Psoas muscle (tissue), 8 donors: ENCODE measurements at regions of chr6 and their contacts with region 1.

Region 1: GRCh38 chr6:123802697-123803496 is 768 bp upstream of the NKAIN2 start:
- DNase-seq: peak; percentile 71 to 91
- ATAC-seq: peak; percentile 90 to 95 (median 94)
- H3K4me3 ChIP-seq: peak overlapping the region; percentile 82
- H3K27ac ChIP-seq: peak overlapping the region; percentile 54
- H3K4me1 ChIP-seq: peaks cover 6% of the 10 kb centered on the region
- H3K27me3 ChIP-seq: no peaks in the 10 kb centered on the region
- CTCF ChIP-seq: peak; percentile 95

Region 2: GRCh38 chr6:123777563-123777962 is 25.3 kb before region 1 on chr6:
- intact Hi-C with region 1: no loop called
- DNase-seq: no peak
- ATAC-seq: peak in 1 of 4 donors; percentile 45
- H3K4me3 ChIP-seq: no peak overlapping the region
- H3K27ac ChIP-seq: no peak overlapping the region
- H3K4me1 ChIP-seq: no peaks in the 10 kb centered on the region
- H3K27me3 ChIP-seq: no peaks in the 10 kb centered on the region
- CTCF ChIP-seq: peak; percentile 33

Region 3: DNA sequence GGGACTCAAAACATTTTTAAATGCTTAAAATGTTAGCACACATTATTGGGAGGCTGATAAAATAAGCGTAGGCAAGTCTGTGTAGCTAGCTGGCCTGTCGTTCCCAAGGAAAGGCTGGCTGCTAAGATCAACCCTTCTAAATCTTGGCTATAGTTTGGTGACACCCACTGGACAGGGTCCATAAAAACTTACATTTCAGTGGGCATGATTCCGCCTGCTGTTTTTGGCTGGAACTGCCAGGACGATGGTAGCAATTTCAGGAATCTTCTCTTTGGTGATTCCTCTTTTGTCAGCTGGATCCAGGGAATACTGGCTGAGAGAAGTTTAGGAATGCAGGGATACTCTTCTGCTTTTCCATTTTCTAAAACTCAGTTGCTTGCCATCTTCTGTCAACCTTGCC is 163.0 kb after region 1 on chr6:
- intact Hi-C with region 1: loop called (anchors 5 to 10 kb)
- DNase-seq: no peak
- ATAC-seq: peak; percentile 64 to 90 (median 73)
- H3K4me3 ChIP-seq: no peak overlapping the region
- H3K27ac ChIP-seq: no peak overlapping the region
- H3K4me1 ChIP-seq: peaks cover 14% of the 10 kb centered on the region
- H3K27me3 ChIP-seq: no peaks in the 10 kb centered on the region
- CTCF ChIP-seq: peak; percentile 41

Region 4: DNA sequence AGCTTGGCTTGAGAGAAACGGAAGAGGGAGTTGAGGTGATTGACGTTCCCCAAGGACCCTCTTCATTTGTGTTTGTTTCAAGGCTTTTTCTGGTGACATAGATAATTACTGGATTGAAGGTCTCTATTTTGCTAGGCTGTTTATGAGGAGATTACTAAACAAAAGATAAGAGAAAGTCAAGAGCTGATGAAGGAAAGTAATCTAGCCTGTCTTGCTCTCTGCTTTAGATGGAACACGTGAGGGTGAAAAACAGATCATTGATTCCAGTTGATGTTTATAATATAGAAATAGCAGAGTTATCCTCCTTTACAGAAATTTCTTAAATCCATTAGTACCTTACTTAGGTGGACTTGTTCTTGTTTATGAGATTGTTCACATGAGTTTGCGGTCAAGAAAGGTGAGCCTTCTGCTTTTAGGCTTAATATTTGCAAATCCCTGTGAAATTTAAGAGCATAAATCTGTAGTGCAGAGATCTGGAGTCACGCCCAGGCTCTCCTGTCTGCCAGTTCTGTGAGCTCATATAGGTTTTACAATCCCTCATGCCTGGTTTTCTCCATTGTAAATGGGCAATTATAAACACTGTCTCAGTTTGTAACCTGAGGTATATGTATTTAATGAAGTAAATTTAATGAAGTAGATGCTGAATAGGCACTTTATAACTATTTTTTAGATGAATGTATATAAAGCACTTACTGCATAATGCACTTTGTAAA is 273.6 kb after region 1 on chr6:
- intact Hi-C with region 1: loop called in 1 of 2 experiments (anchors 10 kb)
- DNase-seq: no peak
- ATAC-seq: no peak
- H3K4me3 ChIP-seq: no peak overlapping the region
- H3K27ac ChIP-seq: peak overlapping the region; percentile 56
- H3K4me1 ChIP-seq: peaks cover 32% of the 10 kb centered on the region
- H3K27me3 ChIP-seq: no peaks in the 10 kb centered on the region
- CTCF ChIP-seq: no peak

Region 5: GRCh38 chr6:124795643-124796463 is 993.0 kb after region 1 on chr6:
- intact Hi-C with region 1: loop called in 1 of 2 experiments (anchors 10 kb)
- DNase-seq: peak in 1 of 2 donors; percentile 56
- ATAC-seq: peak; percentile 68 to 91 (median 72)
- H3K4me3 ChIP-seq: no peak overlapping the region
- H3K27ac ChIP-seq: no peak overlapping the region
- H3K4me1 ChIP-seq: no peaks in the 10 kb centered on the region
- H3K27me3 ChIP-seq: no peaks in the 10 kb centered on the region
- CTCF ChIP-seq: peak; percentile 53

Region 6: DNA sequence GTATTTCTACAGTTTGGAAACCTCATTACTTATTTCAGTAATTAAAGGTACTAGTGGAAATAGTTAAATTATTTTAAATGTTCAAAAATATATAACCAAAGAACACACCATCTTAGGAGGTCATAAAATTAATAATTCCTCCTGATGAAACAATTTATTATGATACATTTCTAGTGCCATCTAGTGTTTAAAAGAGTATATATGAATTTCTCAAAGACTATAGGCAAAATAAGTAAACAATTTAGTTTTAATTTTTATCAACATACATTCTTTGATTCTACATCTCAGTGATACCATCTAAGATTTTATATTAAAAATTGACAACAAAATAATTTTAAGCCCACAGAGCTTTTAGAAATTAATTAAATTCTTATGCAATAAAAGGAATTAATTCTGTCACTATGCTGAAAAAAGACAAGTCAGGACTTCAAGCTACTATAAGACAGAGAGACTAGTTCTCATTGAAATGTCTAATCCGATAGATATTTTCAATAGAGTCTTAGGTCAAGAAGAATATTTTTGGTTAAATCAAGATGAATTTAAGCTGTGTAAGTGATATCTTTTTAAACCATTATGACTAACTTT is 1051.5 kb after region 1 on chr6:
- intact Hi-C with region 1: loop called in 1 of 2 experiments (anchors 2 kb)
- DNase-seq: no peak
- ATAC-seq: no peak
- H3K4me3 ChIP-seq: no peak overlapping the region
- H3K27ac ChIP-seq: no peak overlapping the region
- H3K4me1 ChIP-seq: no peaks in the 10 kb centered on the region
- H3K27me3 ChIP-seq: no peaks in the 10 kb centered on the region
- CTCF ChIP-seq: peak; percentile 28